Breast epithelium (tissue), 4 donors: ENCODE measurements at regions of chr2 and their contacts with region 1.

Region 1: GRCh38 chr2:226334981-226335720 is 464.5 kb downstream of the IRS1 start:
- DNase-seq: no peak
- H3K4me3 ChIP-seq: no peak overlapping the region
- H3K27ac ChIP-seq: no peak overlapping the region
- H3K4me1 ChIP-seq: no peaks in the 10 kb centered on the region
- H3K27me3 ChIP-seq: no peaks in the 10 kb centered on the region
- CTCF ChIP-seq: no peak
- POLR2A ChIP-seq: no peak

Region 2: GRCh38 chr2:226631671-226632070 is 296.5 kb after region 1 on chr2:
- intact Hi-C with region 1: loop called (anchors 5 kb)
- DNase-seq: no peak
- H3K4me3 ChIP-seq: no peak overlapping the region
- H3K27ac ChIP-seq: peak overlapping the region in 1 of 2 donors; percentile 31
- H3K4me1 ChIP-seq: no peaks in the 10 kb centered on the region
- H3K27me3 ChIP-seq: no peaks in the 10 kb centered on the region
- CTCF ChIP-seq: no peak
- POLR2A ChIP-seq: no peak